Posterior vena cava (tissue), 2 donors: ENCODE measurements at regions of chr4 and their contacts with region 1.

Region 1: GRCh38 chr4:26150948-26151347 is 169.9 kb upstream of the RBPJ start:
- DNase-seq: no peak

Region 2: DNA sequence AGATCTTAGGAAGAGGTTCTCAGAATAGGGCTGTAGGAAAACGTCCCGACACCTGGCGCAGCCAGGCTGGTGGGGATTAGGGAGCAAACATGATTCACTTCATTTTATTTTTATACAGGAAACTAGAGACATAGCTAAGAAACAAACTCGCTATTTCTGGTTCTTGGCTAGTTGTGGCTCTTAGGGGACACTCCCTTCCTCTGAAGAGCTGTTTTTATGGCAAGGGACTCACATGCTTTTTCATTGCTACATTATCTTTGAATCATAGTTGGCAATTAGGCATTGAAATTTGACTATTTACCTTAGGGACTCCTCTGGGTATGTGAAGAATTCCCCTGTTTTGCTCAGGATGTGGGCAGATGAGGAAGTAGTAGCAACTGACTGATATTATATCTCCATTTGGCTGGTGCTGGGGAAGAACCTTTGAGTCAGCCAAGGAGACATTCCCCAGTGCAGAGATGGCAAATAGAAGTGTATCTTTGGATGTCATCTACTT is 62.5 kb before region 1 on chr4:
- intact Hi-C with region 1: loop called in 1 of 2 experiments (anchors 5 kb)
- DNase-seq: peak; percentile 79

Region 3: DNA sequence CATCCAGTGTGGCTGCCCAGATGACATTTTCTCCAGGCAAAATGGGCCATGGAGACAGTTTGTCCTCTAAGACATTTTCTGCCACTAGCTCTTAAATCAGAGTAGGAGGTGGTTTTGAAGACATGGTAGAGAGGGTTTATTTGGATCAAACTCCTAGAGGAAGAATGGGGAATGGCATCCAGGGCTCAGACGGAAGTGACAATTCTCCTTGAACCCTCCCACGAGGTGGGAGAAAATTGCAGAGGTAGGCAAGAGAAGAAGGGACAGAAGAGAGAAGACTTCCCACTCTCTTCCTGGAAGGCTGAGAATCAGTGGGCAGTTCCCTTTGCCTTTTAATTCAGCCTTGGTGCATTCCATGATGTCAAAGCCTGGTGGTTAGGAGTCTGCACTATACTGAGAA is 42.9 kb before region 1 on chr4:
- intact Hi-C with region 1: loop called in 1 of 2 experiments (anchors 1 kb)
- DNase-seq: no peak

Region 4: DNA sequence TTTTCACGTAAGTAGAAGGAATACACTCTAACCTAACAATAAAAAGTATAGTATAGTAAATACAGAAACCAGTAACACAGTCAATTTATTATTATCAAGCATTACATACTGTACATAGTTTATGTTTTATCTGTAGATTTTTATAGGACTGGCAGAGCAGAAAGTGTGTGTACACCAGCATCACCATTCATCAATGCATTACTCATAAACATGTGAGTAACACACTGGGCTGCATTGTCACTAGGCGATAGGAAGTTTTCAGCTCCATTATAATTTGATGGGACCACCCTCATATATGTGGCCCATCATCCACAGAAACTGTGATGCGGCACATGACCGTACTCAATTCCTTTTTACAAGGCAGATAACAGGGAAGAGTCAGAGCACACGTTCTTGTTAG is 32.1 kb after region 1 on chr4:
- intact Hi-C with region 1: loop called in 1 of 2 experiments (anchors 1 kb)
- DNase-seq: no peak

Region 5: GRCh38 chr4:26826721-26827120 is 675.8 kb after region 1 on chr4:
- intact Hi-C with region 1: no loop called
- DNase-seq: no peak